GM12878 (cell line): ENCODE measurements at regions of chrX and their contacts with region 1.

Region 1: DNA sequence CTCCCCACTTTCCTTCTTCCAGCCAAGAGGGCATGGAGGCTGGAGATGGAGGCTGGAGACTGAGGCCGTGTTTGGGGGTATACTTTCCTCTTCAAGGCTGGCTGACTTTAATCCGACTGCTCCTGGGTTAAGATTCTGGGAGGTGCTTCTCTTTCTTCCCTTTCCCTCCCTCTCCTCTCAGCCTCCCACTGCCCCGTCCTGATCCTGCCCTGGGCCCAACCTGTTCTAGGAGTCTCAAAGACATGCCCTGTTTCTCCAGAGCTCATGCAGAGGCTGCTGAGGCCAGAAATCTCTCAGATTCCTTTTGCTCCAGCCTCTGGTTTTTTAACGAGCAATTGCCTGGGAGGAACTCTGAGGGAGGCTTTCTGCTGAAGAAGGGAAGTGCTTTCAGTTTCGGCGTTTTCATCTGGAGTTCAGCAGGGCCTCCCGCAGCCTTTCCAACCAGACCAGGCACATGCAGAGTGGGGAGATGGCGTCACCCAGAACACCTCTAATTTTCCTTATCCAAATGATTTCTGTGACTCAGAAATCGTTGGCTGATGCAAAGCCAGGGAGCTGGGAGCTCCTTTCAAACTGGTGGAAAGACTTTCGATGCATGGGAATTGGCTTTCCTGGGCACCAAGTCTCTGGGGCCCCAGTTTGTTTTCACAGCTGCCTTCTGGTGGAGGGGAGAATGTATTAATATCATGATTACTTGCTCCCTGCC is 34.5 kb upstream of the FAM9C start:
- DNase-seq: no peak
- ATAC-seq: no peak
- H3K4me3 ChIP-seq: no peak overlapping the region
- H3K27ac ChIP-seq: peak overlapping the region; percentile 81
- H3K4me1 ChIP-seq: peaks cover 94% of the 10 kb centered on the region
- H3K27me3 ChIP-seq: no peaks in the 10 kb centered on the region
- CTCF ChIP-seq: no peak
- EP300 ChIP-seq: no peak
- POLR2A ChIP-seq: no peak
- RAD21 ChIP-seq: no peak

Region 2: DNA sequence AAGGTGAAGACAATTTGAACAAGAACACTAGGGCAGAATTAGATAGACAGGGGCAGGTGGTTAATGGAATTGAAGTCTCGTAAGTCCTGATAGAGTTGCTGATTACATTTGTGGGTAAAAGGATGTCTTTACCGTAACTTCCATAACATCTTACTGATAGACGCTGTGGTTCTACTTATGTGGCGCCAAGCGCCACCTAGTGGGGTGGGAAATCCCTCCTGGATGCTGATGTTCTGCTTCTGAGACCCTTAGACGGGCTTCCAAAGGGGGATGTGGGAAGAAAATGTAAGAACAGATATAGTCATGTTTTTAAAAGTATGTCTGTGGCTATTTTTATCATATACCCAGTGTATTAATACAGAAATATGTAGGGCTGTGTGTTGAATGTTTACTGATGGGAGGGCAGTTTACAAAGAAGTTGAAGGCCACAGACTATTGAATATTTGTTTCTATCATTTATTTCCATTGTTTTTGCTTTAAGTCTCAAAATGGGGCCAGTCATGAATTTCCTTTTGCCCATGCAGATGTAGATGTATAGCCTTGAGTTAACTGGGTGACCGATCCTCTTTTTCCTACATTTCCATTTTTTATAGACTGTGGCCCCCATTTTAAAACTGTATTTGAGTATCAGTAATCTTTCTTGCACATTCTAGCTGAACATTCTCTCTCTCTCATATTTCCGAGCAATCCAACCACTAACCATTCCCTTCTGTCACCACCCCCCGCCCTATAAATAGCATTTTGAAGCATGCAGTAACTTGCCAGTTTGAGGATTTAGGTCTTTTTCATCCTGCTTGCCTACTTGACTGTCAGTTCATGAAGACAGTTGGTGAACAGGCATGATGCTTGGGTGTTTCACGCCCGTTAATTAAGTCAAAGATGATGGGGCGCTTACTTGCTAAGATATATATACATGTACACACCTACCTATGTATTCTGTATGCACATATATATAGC is 184.5 kb before region 1 on chrX:
- CTCF ChIA-PET with region 1: no interaction called
- POLR2A ChIA-PET with region 1: no interaction called
- RAD21 ChIA-PET with region 1: no interaction called
- SMC1A ChIA-PET with region 1: no interaction called
- in situ Hi-C with region 1: no loop called
- intact Hi-C with region 1: no loop called
- DNase-seq: no peak
- ATAC-seq: peak; percentile 61
- H3K4me3 ChIP-seq: no peak overlapping the region
- H3K27ac ChIP-seq: no peak overlapping the region
- H3K4me1 ChIP-seq: peaks cover 43% of the 10 kb centered on the region
- H3K27me3 ChIP-seq: no peaks in the 10 kb centered on the region
- CTCF ChIP-seq: peak; percentile 84 to 88 (median 84)
- EP300 ChIP-seq: no peak
- POLR2A ChIP-seq: no peak
- RAD21 ChIP-seq: peak; percentile 96

Region 3: GRCh38 chrX:12929701-12930100 is 149.2 kb before region 1 on chrX:
- CTCF ChIA-PET with region 1: no interaction called
- POLR2A ChIA-PET with region 1: no interaction called
- RAD21 ChIA-PET with region 1: no interaction called
- SMC1A ChIA-PET with region 1: no interaction called
- in situ Hi-C with region 1: no loop called
- intact Hi-C with region 1: no loop called
- DNase-seq: no peak
- ATAC-seq: no peak
- H3K4me3 ChIP-seq: no peak overlapping the region
- H3K27ac ChIP-seq: no peak overlapping the region
- H3K4me1 ChIP-seq: no peaks in the 10 kb centered on the region
- H3K27me3 ChIP-seq: no peaks in the 10 kb centered on the region
- CTCF ChIP-seq: no peak
- EP300 ChIP-seq: no peak
- POLR2A ChIP-seq: no peak
- RAD21 ChIP-seq: no peak

Region 4: DNA sequence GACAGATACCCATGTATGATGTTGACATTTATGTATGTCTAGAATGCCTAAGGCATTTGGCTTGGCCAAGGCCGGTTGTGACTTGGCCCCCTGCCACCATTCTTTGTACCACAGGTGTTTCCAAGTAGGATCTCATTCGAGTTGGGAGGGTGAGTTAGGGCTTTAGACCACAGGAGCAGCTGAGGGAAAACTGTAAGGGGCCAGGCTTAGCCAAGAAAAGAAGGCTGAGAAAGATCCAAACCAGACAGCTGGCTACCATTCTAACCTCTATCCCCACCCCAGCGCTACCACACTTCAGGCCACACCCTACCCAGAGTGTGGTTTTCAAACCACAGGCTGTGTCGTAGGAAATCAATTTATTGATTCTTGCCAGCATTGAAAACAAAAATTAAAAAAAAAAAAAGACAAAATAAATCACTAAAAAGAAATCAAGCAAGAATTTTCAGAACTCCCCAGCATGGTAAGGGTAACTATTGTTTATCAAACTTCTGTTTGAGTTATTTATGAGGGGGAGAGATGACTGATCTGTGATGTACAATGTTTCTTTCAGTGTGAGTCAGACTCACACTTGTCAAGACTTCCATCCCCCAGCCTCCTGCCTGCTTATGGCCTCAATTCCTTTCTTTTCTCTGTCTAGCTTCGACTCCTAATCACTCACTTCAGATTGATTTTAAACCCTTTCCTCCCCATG is 94.1 kb before region 1 on chrX:
- CTCF ChIA-PET with region 1: interaction called, 3 read pairs
- POLR2A ChIA-PET with region 1: interaction called, 12 read pairs
- RAD21 ChIA-PET with region 1: interaction called, 562 read pairs
- SMC1A ChIA-PET with region 1: interaction called, 393 read pairs
- in situ Hi-C with region 1: no loop called
- intact Hi-C with region 1: no loop called
- DNase-seq: no peak
- ATAC-seq: peak; percentile 74
- H3K4me3 ChIP-seq: peak overlapping the region; percentile 26; the same call in 1 of the 2 replicates
- H3K27ac ChIP-seq: peak overlapping the region; percentile 98
- H3K4me1 ChIP-seq: peaks cover 68% of the 10 kb centered on the region
- H3K27me3 ChIP-seq: no peaks in the 10 kb centered on the region
- CTCF ChIP-seq: no peak
- EP300 ChIP-seq: peak; percentile 68 to 87; a peak in 3 of 4 replicates
- POLR2A ChIP-seq: no peak
- RAD21 ChIP-seq: no peak; the same call in 1 of the 2 replicates

Region 5: GRCh38 chrX:13022926-13023325 is 56.0 kb before region 1 on chrX:
- CTCF ChIA-PET with region 1: interaction called, 5 read pairs
- POLR2A ChIA-PET with region 1: interaction called, 11 read pairs
- RAD21 ChIA-PET with region 1: interaction called, 9 read pairs
- SMC1A ChIA-PET with region 1: interaction called, 34 read pairs
- in situ Hi-C with region 1: no loop called
- intact Hi-C with region 1: loop called (anchors 2 kb)
- DNase-seq: no peak
- ATAC-seq: peak; percentile 91
- H3K4me3 ChIP-seq: no peak overlapping the region
- H3K27ac ChIP-seq: peak overlapping the region; percentile 47
- H3K4me1 ChIP-seq: peaks cover 43% of the 10 kb centered on the region
- H3K27me3 ChIP-seq: no peaks in the 10 kb centered on the region
- CTCF ChIP-seq: no peak
- EP300 ChIP-seq: peak in 1 of 2 experiments; percentile 75; a peak in 2 of 4 replicates
- POLR2A ChIP-seq: no peak
- RAD21 ChIP-seq: no peak

Region 6: GRCh38 chrX:13064599-13065143 is 14.2 kb before region 1 on chrX:
- CTCF ChIA-PET with region 1: interaction called, 17 read pairs
- POLR2A ChIA-PET with region 1: interaction called, 4 read pairs
- RAD21 ChIA-PET with region 1: interaction called, 3 read pairs
- SMC1A ChIA-PET with region 1: interaction called, 6 read pairs
- in situ Hi-C with region 1: no loop called
- intact Hi-C with region 1: no loop called
- DNase-seq: no peak
- ATAC-seq: peak; percentile 45
- H3K4me3 ChIP-seq: no peak overlapping the region
- H3K27ac ChIP-seq: no peak overlapping the region
- H3K4me1 ChIP-seq: peaks cover 5% of the 10 kb centered on the region; the same call in 1 of the 2 replicates
- H3K27me3 ChIP-seq: no peaks in the 10 kb centered on the region
- CTCF ChIP-seq: no peak
- EP300 ChIP-seq: no peak
- POLR2A ChIP-seq: no peak
- RAD21 ChIP-seq: no peak